Right lobe of liver (tissue), 6 donors: ENCODE measurements at regions of chrX and their contacts with region 1.

Region 1: DNA sequence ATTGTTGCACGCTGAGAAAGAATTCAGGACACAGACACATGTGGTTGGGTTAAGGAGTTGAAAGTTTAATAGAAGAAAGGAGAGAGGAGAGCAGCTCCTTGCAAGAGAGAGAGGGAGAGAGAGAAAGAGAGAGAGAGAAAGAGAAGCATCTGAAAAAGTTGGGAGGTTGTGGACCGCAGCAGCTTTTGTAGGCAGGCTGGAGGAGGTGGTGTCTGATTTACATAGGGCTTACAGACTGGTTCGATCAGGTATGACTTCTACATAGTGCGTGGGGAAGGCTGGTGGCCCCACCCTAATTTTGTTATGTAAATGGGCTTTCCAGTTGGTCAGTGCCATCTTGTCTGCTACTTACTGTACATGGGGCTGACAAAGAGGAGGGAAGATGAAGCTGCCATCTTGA is 27.5 kb upstream of the GYG2 start:
- DNase-seq: no peak
- ATAC-seq: no peak
- H3K4me3 ChIP-seq: no peak overlapping the region
- H3K27ac ChIP-seq: no peak overlapping the region
- H3K4me1 ChIP-seq: no peaks in the 10 kb centered on the region
- H3K27me3 ChIP-seq: no peaks in the 10 kb centered on the region
- CTCF ChIP-seq: no peak
- POLR2A ChIP-seq: no peak

Region 2: GRCh38 chrX:2640275-2641150 is 160.7 kb before region 1 on chrX:
- intact Hi-C with region 1: loop called in 1 of 2 experiments (anchors 10 kb)
- DNase-seq: no peak
- ATAC-seq: no peak
- H3K4me3 ChIP-seq: no peak overlapping the region
- H3K27ac ChIP-seq: no peak overlapping the region
- H3K4me1 ChIP-seq: no peaks in the 10 kb centered on the region
- H3K27me3 ChIP-seq: no peaks in the 10 kb centered on the region
- CTCF ChIP-seq: no peak
- POLR2A ChIP-seq: no peak